ENCODE measurements at regions of chr1 and their contacts with region 1.

Region 1: DNA sequence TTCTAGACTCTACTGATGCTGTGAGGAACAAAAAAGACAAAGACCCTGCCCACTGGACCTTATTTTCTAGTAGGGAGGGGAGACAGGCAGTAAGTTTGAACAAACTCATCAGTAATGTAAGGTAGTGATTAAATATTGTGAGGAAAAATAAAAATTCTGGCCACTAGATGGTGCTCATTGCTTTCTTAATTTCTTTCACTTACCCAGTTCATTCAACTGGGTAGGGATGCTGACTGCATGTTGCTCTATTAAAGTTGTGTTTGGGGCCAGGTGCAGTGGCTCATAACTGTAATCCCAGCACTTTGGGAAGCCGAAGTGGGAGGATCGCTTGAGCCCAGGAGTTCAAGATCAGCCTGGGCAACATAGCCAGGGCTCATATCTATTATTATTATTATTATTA is 6.3 kb upstream of the KYAT3 start:
- DNase-seq: no peak
- H3K4me3 ChIP-seq: no peak overlapping the region
- H3K27ac ChIP-seq: no peak overlapping the region
- H3K27me3 ChIP-seq: no peaks in the 10 kb centered on the region
- CTCF ChIP-seq: peak; percentile 47

Region 2: DNA sequence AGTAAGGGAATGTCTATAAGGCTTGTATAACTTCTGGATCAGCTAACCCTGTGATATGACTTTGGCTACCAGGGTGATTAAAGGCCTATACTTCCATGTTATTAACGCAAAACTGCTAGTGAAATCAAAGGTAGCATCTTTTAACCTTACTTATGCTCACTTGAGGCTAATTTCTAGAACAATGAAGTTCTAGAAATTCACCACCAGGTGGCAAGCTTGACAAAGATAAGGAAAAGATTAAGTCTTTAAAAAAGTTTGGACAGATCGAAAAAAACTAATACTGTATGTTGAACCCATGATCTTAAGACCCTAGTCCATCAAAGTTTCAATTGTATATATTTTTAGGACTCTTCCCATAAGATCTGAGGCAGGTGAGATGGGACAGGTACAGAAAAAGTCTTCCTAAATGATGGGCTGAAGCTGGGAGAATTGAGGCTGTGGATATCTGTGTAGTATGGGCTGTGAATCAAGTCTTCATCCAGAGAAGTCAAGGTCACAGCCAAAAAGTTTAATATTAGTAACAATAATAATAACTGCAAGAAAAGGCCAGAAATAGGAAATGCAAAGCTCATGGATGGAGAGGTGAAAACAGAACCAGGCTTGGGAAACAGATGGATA is 25.1 kb before region 1 on chr1:
- CTCF ChIA-PET with region 1: interaction called, 10 read pairs
- POLR2A ChIA-PET with region 1: no interaction called
- DNase-seq: no peak
- H3K4me3 ChIP-seq: no peak overlapping the region
- H3K27ac ChIP-seq: no peak overlapping the region
- H3K27me3 ChIP-seq: no peaks in the 10 kb centered on the region
- CTCF ChIP-seq: peak; percentile 65

Region 3: DNA sequence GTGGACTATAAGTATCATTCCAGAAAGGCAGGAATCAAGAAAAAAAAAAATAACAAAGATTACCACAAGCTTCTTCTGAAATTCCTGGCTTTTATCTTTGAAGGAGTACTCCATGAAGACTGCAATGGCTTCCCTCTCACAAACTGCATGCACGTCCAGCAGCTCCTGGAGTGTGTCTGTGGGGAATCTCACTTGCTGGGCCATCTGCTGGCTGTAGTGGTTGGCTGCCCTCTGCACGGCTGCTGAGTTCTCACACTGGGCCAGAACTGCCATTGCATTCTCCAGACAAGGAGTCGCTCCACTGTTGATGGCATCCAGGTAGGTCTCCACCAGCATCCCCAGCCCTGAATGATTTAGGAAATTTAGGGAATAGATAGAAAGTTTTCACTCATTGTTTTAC is 150.5 kb after region 1 on chr1:
- CTCF ChIA-PET with region 1: interaction called, 22 read pairs
- POLR2A ChIA-PET with region 1: no interaction called
- DNase-seq: peak; percentile 8
- H3K4me3 ChIP-seq: no peak overlapping the region
- H3K27ac ChIP-seq: no peak overlapping the region
- H3K27me3 ChIP-seq: peaks cover 3% of the 10 kb centered on the region
- CTCF ChIP-seq: peak; percentile 60

Region 4: GRCh38 chr1:89454845-89455521 is 456.3 kb after region 1 on chr1:
- CTCF ChIA-PET with region 1: interaction called, 13 read pairs
- POLR2A ChIA-PET with region 1: no interaction called
- DNase-seq: no peak
- H3K4me3 ChIP-seq: no peak overlapping the region
- H3K27ac ChIP-seq: no peak overlapping the region
- H3K27me3 ChIP-seq: no peaks in the 10 kb centered on the region
- CTCF ChIP-seq: peak; percentile 71